ENCODE measurements at regions of chr3 and their contacts with region 1.

Region 1: GRCh38 chr3:107429320-107430181 is 52.3 kb downstream of the CCDC54 start:
- DNase-seq: peak; percentile 75 to 95 (median 87)

Region 2: DNA sequence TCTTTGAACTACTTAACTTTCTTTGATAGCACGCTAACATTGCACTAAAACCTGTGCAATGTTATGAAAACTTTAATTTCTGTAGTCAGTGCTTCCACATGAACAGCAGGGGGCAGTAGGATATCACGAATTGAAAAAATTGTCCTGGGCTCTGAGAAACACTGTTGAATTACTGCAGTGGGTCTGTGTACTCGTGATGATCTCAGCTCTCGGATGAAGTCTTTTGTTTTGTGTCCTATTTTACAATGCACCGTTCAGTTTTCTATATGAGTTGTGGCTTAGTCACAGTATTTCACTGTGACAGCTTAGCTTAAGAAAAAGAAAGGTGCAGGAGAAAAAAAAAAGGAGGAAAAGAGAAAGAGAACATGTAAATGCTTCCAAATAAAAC is 193.6 kb before region 1 on chr3:
- intact Hi-C with region 1: loop called (anchors 2 kb)
- DNase-seq: peak in 33 of 42 donors; percentile 19 to 92 (median 75)

Region 3: GRCh38 chr3:107271787-107272387 is 157.7 kb before region 1 on chr3:
- intact Hi-C with region 1: loop called (anchors 5 kb)
- DNase-seq: no peak

Region 4: GRCh38 chr3:107522510-107523288 is 93.1 kb after region 1 on chr3 and contains the start of gene BBX:
- intact Hi-C with region 1: loop called (anchors 2 kb)
- DNase-seq: peak; percentile 87 to 98 (median 94)